ENCODE measurements at regions of chr3 and their contacts with region 1.

Region 1: DNA sequence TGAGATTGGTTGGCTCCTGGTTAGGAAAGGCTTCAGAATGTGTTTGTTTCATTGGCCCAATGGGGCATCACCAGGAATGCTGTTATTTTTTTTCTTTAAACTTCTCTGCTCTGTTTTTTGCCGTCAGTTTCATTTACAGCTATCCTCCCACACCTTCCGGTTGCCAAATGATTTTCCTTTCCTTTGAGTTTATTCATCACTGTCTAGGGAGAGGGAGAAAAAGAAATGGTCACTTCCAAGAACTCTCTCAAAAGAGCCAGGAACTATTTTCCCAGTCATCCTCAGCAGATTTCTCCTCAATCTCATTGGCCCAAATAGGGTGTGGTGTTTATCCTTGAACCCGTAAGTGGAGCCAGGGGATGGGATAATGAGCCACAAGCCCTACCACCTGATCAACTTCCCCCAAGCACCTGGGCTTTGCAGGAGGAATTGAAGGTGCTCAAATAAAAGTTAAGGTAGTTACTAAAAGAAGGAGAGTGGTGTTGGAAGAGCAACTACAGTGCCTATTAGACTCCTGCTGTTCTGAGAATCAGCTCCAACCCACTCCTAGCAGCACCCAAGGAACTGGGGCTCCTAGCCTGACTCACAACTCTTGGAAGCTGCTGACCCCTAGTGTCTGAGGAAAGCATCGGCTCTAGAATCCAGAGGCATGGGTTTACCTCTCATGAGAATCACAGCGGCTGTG is 183.8 kb upstream of the IL12A start:
- DNase-seq: peak; percentile 61
- ATAC-seq: peak; percentile 65
- H3K4me3 Mint-ChIP-seq: no peak overlapping the region
- H3K27ac Mint-ChIP-seq: no peak overlapping the region
- H3K4me1 Mint-ChIP-seq: no peaks in the 10 kb centered on the region
- H3K27me3 Mint-ChIP-seq: peaks cover 10% of the 10 kb centered on the region

Region 2: GRCh38 chr3:159200176-159200575 is 604.7 kb before region 1 on chr3:
- CTCF ChIA-PET with region 1: no interaction called
- POLR2A ChIA-PET with region 1: no interaction called
- intact Hi-C with region 1: no loop called
- DNase-seq: no peak
- ATAC-seq: no peak
- H3K4me3 Mint-ChIP-seq: no peak overlapping the region
- H3K27ac Mint-ChIP-seq: no peak overlapping the region
- H3K4me1 Mint-ChIP-seq: no peaks in the 10 kb centered on the region
- H3K27me3 Mint-ChIP-seq: no peaks in the 10 kb centered on the region

Region 3: GRCh38 chr3:159260049-159260662 is 544.7 kb before region 1 on chr3:
- CTCF ChIA-PET with region 1: interaction called, 24 read pairs
- POLR2A ChIA-PET with region 1: no interaction called
- intact Hi-C with region 1: loop called (anchors 1 kb)
- DNase-seq: peak; percentile 56
- ATAC-seq: no peak
- H3K4me3 Mint-ChIP-seq: no peak overlapping the region
- H3K27ac Mint-ChIP-seq: no peak overlapping the region
- H3K4me1 Mint-ChIP-seq: no peaks in the 10 kb centered on the region
- H3K27me3 Mint-ChIP-seq: peaks cover 3% of the 10 kb centered on the region

Region 4: DNA sequence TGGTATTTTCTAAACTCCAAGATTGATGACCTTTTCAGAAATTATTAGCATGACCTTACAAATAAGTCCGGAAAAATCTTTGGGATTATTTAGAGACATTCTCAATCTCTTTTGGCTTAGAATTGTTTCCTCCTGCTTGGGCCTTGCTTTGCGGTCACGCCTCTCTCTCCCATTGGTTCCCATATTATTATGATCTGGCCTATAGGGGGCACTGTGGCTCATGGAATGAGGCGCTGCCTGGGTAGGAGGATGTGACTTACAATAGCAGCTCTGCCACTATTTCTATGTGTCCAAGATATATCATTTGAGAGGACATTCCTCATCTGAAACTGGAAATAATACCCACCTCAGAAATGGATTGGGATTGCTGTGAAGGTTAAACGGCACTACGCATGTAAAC is 538.1 kb before region 1 on chr3:
- CTCF ChIA-PET with region 1: interaction called, 24 read pairs
- POLR2A ChIA-PET with region 1: no interaction called
- intact Hi-C with region 1: loop called (anchors 1 kb)
- DNase-seq: peak; percentile 46
- ATAC-seq: no peak
- H3K4me3 Mint-ChIP-seq: no peak overlapping the region
- H3K27ac Mint-ChIP-seq: no peak overlapping the region
- H3K4me1 Mint-ChIP-seq: no peaks in the 10 kb centered on the region
- H3K27me3 Mint-ChIP-seq: peaks cover 6% of the 10 kb centered on the region

Region 5: GRCh38 chr3:159322322-159322939 is 482.4 kb before region 1 on chr3:
- CTCF ChIA-PET with region 1: interaction called, 5 read pairs
- POLR2A ChIA-PET with region 1: no interaction called
- intact Hi-C with region 1: loop called (anchors 1 to 10 kb)
- DNase-seq: peak; percentile 54
- ATAC-seq: no peak
- H3K4me3 Mint-ChIP-seq: no peak overlapping the region
- H3K27ac Mint-ChIP-seq: no peak overlapping the region
- H3K4me1 Mint-ChIP-seq: no peaks in the 10 kb centered on the region
- H3K27me3 Mint-ChIP-seq: no peaks in the 10 kb centered on the region

Region 6: DNA sequence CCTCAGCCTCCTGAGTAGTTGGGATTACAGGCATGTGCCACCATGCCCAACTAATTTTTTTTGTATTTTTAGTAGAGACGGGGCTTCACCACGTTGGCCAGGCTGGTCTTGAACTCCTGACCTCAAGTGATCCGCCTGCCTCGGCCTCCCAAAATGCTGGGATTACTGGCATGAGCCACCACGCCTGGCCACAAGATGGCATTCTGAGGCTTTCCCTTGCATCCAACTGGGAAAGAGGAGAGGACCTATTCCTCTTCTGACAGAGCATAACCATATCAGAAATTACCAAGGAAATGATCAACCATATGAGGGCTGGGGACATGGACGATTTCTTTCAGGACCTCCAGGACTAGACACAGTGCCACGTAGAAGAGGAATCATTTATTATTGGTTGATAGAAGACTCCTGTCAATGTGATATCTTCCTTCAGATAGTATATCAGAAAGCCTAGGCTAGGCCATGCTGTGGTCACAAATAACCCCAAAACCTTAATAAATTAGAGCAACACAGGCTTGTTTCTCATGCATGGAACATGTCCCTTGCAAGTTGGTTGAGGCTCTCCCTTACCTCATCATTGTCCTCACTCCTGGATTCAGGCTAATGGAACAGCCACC is 188.5 kb before region 1 on chr3:
- CTCF ChIA-PET with region 1: no interaction called
- POLR2A ChIA-PET with region 1: no interaction called
- intact Hi-C with region 1: loop called in 1 of 2 experiments (anchors 5 kb)
- DNase-seq: no peak
- ATAC-seq: no peak
- H3K4me3 Mint-ChIP-seq: no peak overlapping the region
- H3K27ac Mint-ChIP-seq: no peak overlapping the region
- H3K4me1 Mint-ChIP-seq: no peaks in the 10 kb centered on the region
- H3K27me3 Mint-ChIP-seq: no peaks in the 10 kb centered on the region

Measured in activated CD4-positive, alpha-beta T cell treated with anti-CD3 and anti-CD28 coated beads for 36 hours (primary cell).